ENCODE measurements at regions of chr7 and their contacts with region 1.

Region 1: GRCh38 chr7:32479574-32480200 is 10.5 kb downstream of the LSM5 start:
- DNase-seq: no peak
- ATAC-seq: peak; percentile 48
- H3K4me3 ChIP-seq: no peak overlapping the region
- H3K4me3 Mint-ChIP-seq: no peak overlapping the region
- H3K27ac ChIP-seq: no peak overlapping the region
- H3K27ac Mint-ChIP-seq: no peak overlapping the region
- H3K4me1 ChIP-seq: no peaks in the 10 kb centered on the region
- H3K4me1 Mint-ChIP-seq: peaks cover 2 to 10% (median 7%) of the 10 kb centered on the region in 7 donors
- H3K27me3 ChIP-seq: no peaks in the 10 kb centered on the region
- H3K27me3 Mint-ChIP-seq: no peaks in the 10 kb centered on the region

Region 2: GRCh38 chr7:31134246-31135188 is 1345.2 kb before region 1 on chr7:
- CTCF ChIA-PET with region 1: no interaction called
- POLR2A ChIA-PET with region 1: no interaction called
- intact Hi-C with region 1: loop called in 1 of 2 experiments (anchors 10 kb)
- DNase-seq: peak in 8 of 9 donors; percentile 2 to 43 (median 30)
- ATAC-seq: peak; percentile 63
- H3K4me3 ChIP-seq: no peak overlapping the region
- H3K4me3 Mint-ChIP-seq: peak overlapping the region in 1 of 10 donors; percentile 60
- H3K27ac ChIP-seq: no peak overlapping the region
- H3K27ac Mint-ChIP-seq: no peak overlapping the region
- H3K4me1 ChIP-seq: no peaks in the 10 kb centered on the region
- H3K4me1 Mint-ChIP-seq: peaks cover 0 to 6% (median 0%) of the 10 kb centered on the region in 7 donors
- H3K27me3 ChIP-seq: no peaks in the 10 kb centered on the region
- H3K27me3 Mint-ChIP-seq: peaks cover 0 to 6% (median 3%) of the 10 kb centered on the region in 5 donors